Right cardiac atrium (tissue), 5 donors: ENCODE measurements at regions of chr1 and their contacts with region 1.

Region 1: DNA sequence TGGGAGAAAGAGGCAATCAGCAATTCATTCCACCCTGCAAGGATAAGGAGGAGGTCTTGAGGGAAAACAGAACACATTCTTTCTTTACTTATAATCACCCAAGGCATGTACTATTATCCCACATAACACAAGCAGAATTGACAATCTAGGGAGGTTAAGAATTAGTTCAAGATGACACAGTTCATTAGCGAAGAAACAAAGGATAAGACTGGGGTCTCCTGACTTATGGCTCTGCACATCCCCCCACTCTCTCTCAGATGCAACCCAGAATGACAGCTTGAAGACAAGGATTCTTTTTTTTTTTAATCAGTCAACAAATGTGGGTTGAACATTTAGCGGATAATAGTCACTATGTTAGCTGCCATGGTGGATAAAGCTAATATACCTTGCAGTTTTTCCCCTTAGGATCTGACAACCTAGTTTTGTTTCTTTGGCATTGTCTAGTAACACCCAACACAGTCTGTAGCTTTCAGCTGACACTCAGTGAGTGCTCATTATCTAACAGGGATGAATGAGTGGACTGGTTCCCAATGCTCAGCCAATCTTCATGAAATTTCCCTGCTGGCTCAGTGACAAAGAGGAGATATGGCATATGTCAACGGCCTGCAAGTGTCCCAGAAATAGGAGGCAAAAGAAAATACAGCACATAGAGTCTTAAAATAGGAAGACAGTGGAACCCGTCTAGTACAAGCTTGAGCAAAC is 35.1 kb downstream of the RXRG start:
- DNase-seq: no peak
- ATAC-seq: peak; percentile 86 to 92
- H3K4me3 ChIP-seq: no peak overlapping the region
- H3K27ac ChIP-seq: no peak overlapping the region
- H3K4me1 ChIP-seq: peaks cover 2% of the 10 kb centered on the region
- H3K27me3 ChIP-seq: no peaks in the 10 kb centered on the region

Region 2: GRCh38 chr1:165279882-165280281 is 129.9 kb before region 1 on chr1:
- intact Hi-C with region 1: no loop called
- DNase-seq: no peak
- ATAC-seq: no peak
- H3K4me3 ChIP-seq: no peak overlapping the region
- H3K27ac ChIP-seq: no peak overlapping the region
- H3K4me1 ChIP-seq: no peaks in the 10 kb centered on the region
- H3K27me3 ChIP-seq: no peaks in the 10 kb centered on the region

Region 3: DNA sequence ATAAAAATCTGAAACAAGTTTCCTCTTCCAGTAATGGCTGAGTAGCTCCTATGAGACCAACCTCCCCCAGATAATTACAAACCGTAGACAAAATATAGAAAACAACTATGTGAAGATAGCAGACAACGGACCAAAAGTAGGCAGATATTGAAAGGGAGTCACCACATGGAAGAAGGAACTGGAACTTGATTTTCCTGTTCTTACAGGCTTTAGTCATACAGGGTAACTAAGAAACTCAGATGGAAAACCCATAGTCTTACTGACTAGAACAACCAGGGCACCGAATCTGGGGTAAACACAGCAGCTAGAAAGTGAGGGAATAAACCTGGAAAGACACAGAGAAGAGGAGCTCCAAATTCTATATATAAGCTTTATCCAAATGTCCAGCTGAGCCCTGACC is 79.3 kb before region 1 on chr1:
- intact Hi-C with region 1: no loop called
- DNase-seq: no peak
- ATAC-seq: no peak
- H3K4me3 ChIP-seq: no peak overlapping the region
- H3K27ac ChIP-seq: no peak overlapping the region
- H3K4me1 ChIP-seq: no peaks in the 10 kb centered on the region
- H3K27me3 ChIP-seq: no peaks in the 10 kb centered on the region

Region 4: GRCh38 chr1:165434281-165434680 is 24.5 kb after region 1 on chr1:
- intact Hi-C with region 1: no loop called
- DNase-seq: no peak
- ATAC-seq: no peak
- H3K4me3 ChIP-seq: no peak overlapping the region
- H3K27ac ChIP-seq: no peak overlapping the region
- H3K4me1 ChIP-seq: no peaks in the 10 kb centered on the region
- H3K27me3 ChIP-seq: no peaks in the 10 kb centered on the region

Region 5: GRCh38 chr1:165543532-165544495 is 134.0 kb after region 1 on chr1 and contains the start of gene LRRC52:
- intact Hi-C with region 1: loop called in 1 of 4 experiments (anchors 5 kb)
- DNase-seq: peak; percentile 85 to 91 (median 88)
- ATAC-seq: peak; percentile 85 to 88
- H3K4me3 ChIP-seq: no peak within 1 kb of the TSS
- H3K27ac ChIP-seq: peak within 1 kb of the TSS; percentile 54
- H3K4me1 ChIP-seq: peaks cover 9% of the 10 kb centered on the region
- H3K27me3 ChIP-seq: no peaks in the 10 kb centered on the region
- total RNA-seq, gene LRRC52: not detected